Cardiac septum (tissue), 1 donor: ENCODE measurements at regions of chr10 and their contacts with region 1.

Region 1: GRCh38 chr10:125982260-125982948 is 86.0 kb downstream of the FANK1 start:
- DNase-seq: no peak

Region 2: DNA sequence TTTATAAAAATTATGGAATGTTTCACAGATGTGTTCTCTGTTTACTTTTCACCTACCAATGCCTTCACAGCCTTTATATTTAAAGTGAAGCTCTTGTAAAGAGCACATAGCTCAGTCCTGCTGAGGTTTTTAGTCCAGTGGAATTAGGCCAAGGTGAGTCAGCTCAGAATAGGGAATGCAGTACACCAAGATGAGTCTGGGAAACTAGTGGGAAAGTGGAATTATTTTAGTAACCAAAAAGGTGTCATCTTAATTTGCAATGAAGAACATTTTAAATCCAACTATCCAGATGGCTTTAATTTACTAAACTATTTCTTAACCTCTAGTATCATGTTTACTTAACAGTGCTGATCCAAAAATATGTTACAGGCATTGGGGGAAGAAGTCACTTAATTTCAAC is 585.7 kb before region 1 on chr10:
- intact Hi-C with region 1: no loop called
- DNase-seq: no peak

Region 3: GRCh38 chr10:126387023-126387921 is 404.9 kb after region 1 on chr10:
- intact Hi-C with region 1: loop called (anchors 1 kb)
- DNase-seq: no peak

Region 4: GRCh38 chr10:126504063-126504739 is 521.8 kb after region 1 on chr10:
- intact Hi-C with region 1: loop called (anchors 5 kb)
- DNase-seq: no peak

Region 5: DNA sequence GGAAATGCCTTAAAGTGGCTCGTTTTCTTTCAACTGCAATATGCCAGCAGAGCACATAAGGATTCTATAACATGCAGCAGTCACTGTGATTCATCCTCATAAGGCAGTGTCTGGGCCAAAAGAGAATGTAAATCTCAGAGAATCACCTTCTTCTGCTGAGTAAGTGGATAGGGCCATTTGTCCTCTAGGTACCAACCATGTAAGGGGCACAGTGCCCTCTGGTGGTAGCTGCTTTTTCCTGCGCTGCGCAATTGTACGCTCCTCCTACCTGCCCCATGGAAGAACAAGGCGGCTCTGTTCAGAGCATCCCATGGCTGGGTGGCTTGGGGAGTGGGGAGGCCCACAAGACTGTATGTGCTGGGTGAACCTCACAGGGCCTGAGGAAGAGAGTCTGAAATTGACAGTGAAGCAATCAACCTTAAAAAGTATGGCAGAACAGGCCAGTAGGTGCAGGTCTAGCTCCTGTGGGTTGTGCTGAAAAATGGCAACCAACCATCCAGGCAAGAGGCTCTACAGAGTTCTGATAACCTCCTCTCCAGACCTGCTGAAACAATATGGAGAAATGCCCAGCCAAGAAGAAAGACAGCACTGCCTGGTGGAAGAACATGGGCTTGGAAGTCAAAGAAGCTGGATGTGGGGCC is 766.7 kb after region 1 on chr10:
- intact Hi-C with region 1: loop called (anchors 5 kb)
- DNase-seq: peak; percentile 80